Activated CD4-positive, alpha-beta T cell treated with anti-CD3 and anti-CD28 coated beads, Interleukin-2, amount 10 ng/mL, durations not matched to agents 24 days and 14 days (primary cell): ENCODE measurements at regions of chr12 and their contacts with region 1.

Region 1: DNA sequence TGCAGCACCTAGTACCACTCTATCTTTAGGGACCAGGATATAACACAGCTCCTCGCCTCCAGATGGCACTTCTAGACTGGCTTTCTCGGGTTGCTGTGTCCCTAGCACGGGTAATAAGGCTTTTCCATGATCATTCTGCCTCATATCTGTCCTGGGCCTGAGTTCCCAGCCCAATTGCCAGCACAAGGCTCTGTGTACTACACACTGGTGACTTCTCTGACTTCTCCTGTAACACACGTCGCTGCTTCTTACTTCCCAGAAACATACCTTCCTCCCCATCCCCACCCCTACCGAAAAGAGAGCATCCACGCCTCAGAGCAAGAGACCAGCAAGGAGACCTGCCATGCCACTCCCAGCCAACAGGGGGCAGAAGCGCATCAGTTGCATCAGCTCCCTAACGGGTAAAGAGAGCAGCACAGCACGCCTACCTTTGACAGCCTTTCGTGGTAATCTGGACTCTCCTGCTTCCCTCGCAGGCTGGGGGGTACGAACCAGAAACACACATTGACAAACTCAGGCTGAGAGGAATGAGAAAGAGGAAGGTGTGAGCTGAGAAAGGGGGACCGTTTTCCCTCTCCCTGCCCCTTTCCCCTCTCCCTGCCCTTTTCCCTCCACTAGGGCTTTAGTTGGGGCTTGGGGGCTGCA is 21.2 kb upstream of the ZNF740 start:
- DNase-seq: peak; percentile 97
- H3K4me3 Mint-ChIP-seq: peak overlapping the region; percentile 8
- H3K27ac Mint-ChIP-seq: peak overlapping the region; percentile 38
- H3K4me1 Mint-ChIP-seq: peaks cover 9% of the 10 kb centered on the region
- H3K27me3 Mint-ChIP-seq: no peaks in the 10 kb centered on the region

Region 2: DNA sequence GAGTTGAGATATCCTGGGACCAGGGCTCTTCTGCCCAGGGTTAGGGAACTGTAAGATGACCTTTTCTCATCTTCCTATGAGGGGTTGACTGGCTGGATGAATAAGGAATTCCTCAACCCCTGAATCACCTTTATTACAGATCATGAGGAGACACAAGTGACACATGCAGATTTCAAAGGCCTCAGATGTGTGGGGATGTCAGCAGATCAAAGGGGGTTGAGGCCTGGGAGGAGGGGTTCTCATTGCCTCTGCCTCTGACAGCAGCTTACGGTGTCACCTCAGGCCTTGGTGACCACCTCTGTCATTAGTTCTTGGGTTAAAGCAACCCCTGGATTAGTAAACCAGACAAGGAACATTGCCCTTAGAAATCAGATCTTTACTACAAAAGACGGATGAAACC is 556.0 kb before region 1 on chr12:
- intact Hi-C with region 1: no loop called
- DNase-seq: no peak
- H3K4me3 Mint-ChIP-seq: no peak overlapping the region
- H3K27ac Mint-ChIP-seq: no peak overlapping the region
- H3K4me1 Mint-ChIP-seq: peaks cover 24% of the 10 kb centered on the region
- H3K27me3 Mint-ChIP-seq: peaks cover 15% of the 10 kb centered on the region

Region 3: GRCh38 chr12:53079226-53080117 is 79.8 kb before region 1 on chr12 and contains the start of gene SPRYD3:
- intact Hi-C with region 1: no loop called
- DNase-seq: peak; percentile 99
- H3K4me3 Mint-ChIP-seq: peak within 1 kb of the TSS; percentile 93
- H3K27ac Mint-ChIP-seq: peak within 1 kb of the TSS; percentile 93
- H3K4me1 Mint-ChIP-seq: peaks cover 23% of the 10 kb centered on the region
- H3K27me3 Mint-ChIP-seq: peaks cover 2% of the 10 kb centered on the region
- total RNA-seq, gene SPRYD3: 35.6 TPM in 2 replicates

Region 4: DNA sequence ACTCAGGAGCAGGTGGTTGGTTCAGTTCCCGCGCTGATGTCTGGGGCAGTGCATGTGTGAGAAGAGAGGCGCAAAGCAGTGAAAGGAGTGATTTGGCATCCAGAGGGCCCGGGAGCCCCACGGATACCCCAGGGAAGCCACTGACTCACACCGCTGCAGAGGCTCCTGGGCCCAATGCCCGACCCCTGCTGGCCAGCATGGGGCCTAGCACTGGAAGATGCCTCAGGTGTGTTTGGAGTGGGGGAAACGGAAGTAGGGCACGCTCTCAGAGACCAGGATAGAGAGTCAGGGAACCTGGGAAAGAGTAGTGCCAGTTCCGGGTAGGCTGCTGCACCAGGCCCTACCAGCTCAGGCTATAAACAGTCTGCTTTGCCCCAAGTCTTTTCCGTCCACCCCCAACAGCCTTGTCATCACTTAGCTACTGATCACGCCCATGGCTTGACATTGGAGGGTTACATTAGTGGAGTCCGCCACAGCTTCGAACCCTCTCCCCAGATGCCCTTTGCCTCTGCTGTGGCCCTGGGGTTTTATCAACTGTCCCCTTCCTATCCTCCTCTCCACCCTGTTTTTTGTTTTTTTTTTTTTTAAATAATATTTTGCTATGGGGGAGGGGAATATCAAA is 30.9 kb after region 1 on chr12:
- intact Hi-C with region 1: loop called (anchors 1 kb)
- DNase-seq: peak; percentile 79
- H3K4me3 Mint-ChIP-seq: no peak overlapping the region
- H3K27ac Mint-ChIP-seq: no peak overlapping the region
- H3K4me1 Mint-ChIP-seq: peaks cover 22% of the 10 kb centered on the region
- H3K27me3 Mint-ChIP-seq: no peaks in the 10 kb centered on the region

Region 5: DNA sequence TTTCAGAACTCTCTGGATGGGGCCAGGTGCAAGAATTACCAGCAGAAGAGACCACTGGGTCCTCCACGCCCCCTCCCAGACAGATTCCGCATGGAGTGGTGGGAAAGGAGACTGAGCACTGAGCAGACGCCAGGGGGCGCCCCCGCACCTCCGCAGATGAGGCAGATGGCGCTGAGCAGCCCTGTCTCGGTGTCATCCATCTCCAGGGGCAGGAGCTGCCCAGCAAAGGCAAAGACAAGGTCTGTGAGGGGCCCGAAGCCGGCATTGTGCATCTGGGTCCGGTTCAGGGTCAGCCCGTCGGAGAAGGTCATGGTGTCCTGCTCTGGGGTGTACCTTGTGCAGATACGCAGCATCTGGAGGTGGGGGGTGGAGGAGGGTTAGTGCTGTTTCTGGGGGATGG is 54.0 kb after region 1 on chr12:
- intact Hi-C with region 1: loop called (anchors 2 kb)
- DNase-seq: peak; percentile 95
- H3K4me3 Mint-ChIP-seq: peak overlapping the region; percentile 49
- H3K27ac Mint-ChIP-seq: peak overlapping the region; percentile 70
- H3K4me1 Mint-ChIP-seq: peaks cover 77% of the 10 kb centered on the region
- H3K27me3 Mint-ChIP-seq: no peaks in the 10 kb centered on the region

Region 6: DNA sequence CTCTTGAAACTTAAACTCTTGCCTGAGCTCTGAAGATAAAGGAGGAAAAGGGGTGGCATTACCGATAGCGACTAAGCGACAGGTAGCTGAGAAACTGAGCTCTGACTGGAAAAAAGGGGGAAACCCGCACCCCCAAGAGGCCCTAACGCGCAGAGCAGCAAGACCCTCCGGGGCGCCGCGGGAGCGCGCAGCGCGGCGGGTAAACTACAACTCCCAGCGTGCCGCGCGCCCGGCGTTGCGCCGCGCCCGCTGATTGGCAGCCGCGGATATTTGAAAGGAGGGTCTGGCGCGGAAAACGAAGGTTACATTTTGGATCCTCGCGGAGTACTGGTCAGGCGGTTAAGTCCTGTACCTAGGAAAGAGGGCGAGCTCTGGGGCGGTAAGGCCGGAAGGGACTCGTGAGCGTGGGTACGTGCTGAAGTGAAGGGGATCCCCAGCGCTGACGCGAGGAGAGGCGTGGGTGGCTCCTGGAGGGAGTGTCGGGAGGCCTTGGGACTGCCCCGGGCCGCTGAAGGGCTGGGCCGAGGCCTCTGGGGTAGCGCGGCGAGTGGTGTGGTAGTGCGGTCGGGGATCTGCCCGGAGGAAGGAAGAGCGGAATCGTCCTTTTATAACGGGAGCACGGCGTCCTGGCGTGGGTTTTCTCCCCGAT is 108.8 kb after region 1 on chr12 and contains the start of gene ESPL1:
- intact Hi-C with region 1: loop called (anchors 5 kb)
- DNase-seq: peak; percentile 96
- H3K4me3 Mint-ChIP-seq: peak within 1 kb of the TSS; percentile 89
- H3K27ac Mint-ChIP-seq: peak within 1 kb of the TSS; percentile 92
- H3K4me1 Mint-ChIP-seq: peaks cover 51% of the 10 kb centered on the region
- H3K27me3 Mint-ChIP-seq: no peaks in the 10 kb centered on the region
- total RNA-seq, gene ESPL1: 71.8 and 76.7 TPM in 2 replicates

Region 7: GRCh38 chr12:53295070-53295890 is 136.0 kb after region 1 on chr12 and contains the start of gene PFDN5:
- intact Hi-C with region 1: loop called (anchors 2 kb)
- DNase-seq: peak; percentile 97
- H3K4me3 Mint-ChIP-seq: peak within 1 kb of the TSS; percentile 98
- H3K27ac Mint-ChIP-seq: peak within 1 kb of the TSS; percentile 90
- H3K4me1 Mint-ChIP-seq: peaks cover 33% of the 10 kb centered on the region
- H3K27me3 Mint-ChIP-seq: no peaks in the 10 kb centered on the region
- total RNA-seq, gene PFDN5: 319 and 342 TPM in 2 replicates

Region 8: GRCh38 chr12:53694756-53695151 is 535.4 kb after region 1 on chr12:
- intact Hi-C with region 1: no loop called
- DNase-seq: no peak
- H3K4me3 Mint-ChIP-seq: peak overlapping the region; percentile 68
- H3K27ac Mint-ChIP-seq: no peak overlapping the region
- H3K4me1 Mint-ChIP-seq: peaks cover 22% of the 10 kb centered on the region
- H3K27me3 Mint-ChIP-seq: peaks cover 66% of the 10 kb centered on the region